ENCODE measurements at regions of chr10 and their contacts with region 1.

Region 1: DNA sequence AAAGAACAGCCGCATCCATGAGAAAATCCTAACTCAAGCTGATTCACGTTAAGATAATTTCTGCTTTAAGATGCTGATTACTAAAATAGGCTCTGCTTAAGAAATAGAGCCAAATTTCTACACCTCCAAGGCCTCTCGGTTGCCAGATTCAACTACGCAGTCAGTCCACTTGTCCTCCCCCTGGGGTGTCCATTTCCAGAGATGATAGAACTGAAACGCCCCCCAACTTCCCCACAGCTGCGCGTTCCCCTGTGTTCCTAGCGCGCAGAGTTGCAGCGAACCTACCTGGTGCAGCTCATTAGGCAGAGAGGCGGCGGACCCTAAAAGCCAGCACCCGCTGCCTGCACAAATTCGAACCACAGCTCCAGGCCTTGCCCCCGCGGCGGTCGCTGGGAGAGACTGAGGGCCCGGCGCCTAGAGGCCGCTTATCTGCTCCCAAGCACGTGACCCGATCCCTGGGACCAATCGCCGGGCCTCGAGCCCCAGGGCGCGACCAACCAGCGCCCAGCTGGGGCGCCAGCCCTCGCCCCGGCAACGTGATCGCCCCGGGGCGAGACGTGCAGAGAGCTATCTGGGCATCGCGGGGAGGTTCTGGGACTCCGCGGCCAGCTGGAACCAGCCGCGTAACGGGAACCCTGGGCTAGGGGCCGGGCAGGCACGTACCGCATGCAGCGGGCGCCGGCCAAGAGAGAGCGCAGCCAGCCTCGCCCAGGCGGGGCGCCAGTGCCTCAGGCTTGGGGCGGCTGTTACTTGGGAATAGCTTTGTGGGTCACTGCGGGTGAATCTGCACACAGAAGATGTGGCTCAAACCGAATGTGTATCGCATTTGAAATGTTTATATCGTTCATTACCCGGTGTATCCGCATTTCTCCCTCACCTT is at the start of gene PPP1R3C:
- DNase-seq: peak; percentile 89 to 99 (median 94)

Region 2: DNA sequence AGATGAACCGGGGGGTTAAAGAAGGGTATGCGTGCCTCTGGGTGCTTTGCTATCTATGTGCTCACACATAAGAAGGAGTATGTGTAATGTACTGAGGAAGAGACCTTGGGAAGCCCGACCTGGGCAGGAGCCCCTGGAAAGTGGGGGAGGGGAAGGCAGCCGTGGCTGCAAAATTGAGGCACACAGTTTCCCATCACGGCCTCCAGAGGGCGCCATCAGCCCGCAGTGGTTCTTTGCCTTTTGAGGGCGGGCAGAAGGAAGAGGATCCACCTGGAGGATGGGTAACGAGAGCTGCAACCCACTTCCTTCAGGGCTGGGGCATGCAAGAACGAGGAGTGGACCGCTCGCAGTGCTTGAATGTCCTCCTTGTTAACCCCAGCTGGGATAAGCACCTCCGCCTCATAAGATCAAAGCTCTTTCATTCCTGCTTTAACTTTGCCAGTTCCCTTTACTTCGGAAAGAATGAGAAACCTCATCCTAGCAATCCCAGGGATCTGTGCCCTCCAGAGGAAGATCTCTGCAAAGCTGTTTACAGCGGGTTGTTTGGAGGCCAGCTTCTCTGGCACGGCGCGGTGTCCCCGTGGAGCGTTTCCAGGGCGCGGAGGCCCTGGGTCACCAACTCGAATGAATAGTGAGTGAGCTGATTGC is 334.6 kb before region 1 on chr10:
- intact Hi-C with region 1: loop called (anchors 1 kb)
- DNase-seq: peak; percentile 68 to 96 (median 78)

Region 3: DNA sequence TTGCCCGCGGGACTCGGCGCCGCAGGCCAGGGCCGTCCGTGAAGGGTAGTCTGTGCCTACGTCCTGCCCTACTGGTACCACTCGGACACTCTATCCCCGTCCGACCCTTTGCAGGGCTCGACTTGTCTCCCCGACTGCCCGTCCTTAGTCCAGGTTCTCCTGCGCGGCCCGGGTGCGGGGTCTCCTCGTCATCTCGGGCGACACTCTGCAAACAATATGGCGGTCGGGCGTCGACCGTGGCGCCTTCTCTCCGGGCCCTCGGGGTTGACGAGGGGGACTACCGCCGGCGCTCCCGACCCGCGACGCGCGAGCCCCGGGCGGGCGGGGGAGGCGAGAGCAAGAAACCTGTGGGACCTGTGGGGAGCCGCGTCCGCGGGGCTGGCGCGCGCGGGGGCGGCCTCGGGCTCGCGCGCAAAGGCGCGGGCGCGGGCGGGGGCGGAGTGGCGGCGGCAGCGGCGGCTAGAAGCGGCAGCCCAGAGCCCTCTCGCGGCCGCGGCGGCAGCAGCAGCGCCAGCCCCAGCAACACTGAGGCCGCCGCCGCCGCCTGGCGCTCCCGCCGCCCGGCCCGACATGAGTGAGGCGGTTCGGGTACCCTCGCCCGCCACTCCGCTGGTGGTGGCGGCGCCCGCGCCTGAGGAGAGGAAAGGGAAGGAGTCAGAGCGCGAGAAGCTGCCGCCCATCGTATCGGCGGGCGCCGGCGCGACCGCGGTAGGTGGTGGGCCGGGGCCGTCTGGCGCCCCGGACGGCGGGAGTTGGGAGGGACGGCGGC is 222.9 kb before region 1 on chr10 and contains the start of gene HECTD2:
- intact Hi-C with region 1: loop called (anchors 2 kb)
- DNase-seq: peak; percentile 60 to 97 (median 79)

Region 4: DNA sequence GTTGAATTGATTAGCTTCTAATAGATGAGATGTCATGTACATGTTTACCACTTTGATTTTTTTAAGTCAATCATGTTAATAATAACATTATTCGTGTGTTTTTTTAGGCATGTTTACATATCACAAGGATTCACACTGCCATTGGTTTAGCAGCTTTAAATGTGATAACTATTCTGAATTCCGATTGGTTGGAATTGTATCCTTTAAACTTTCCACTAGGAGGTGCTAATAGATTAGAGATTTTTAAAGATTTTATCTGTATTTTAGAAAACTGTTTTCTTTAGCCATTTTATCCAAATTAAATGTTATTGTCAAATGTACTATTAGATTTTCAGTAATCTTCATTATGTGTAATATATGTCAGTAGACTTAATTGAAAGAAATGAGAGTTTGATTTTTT is 139.6 kb before region 1 on chr10:
- intact Hi-C with region 1: loop called (anchors 1 kb)
- DNase-seq: no peak

Region 5: DNA sequence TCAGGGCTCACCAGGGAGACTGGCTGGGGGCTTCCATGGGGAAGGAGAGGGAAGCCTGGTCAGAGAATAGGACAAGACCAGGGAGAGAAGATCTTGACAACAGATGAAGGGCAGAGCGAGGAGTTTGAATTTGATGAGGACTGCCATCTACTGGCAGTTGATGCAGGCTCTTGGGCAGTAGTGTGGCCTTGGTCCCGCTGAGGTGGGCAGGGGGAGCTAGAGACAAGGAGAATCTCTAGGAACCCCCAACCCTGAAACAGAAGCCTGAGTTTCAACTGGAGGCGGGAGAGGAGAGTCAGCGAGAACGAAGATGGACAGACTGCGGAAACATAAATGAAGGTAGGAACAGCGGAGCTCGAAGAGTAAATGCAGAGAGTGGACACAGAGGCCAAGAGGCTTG is 81.1 kb before region 1 on chr10:
- intact Hi-C with region 1: loop called (anchors 5 kb)
- DNase-seq: peak in 7 of 10 donors; percentile 14 to 87 (median 31)

Region 6: GRCh38 chr10:91797874-91798648 is 165.2 kb after region 1 on chr10 and contains the start of gene TNKS2:
- intact Hi-C with region 1: loop called (anchors 5 kb)
- DNase-seq: peak; percentile 85 to 98 (median 89)

Region 7: DNA sequence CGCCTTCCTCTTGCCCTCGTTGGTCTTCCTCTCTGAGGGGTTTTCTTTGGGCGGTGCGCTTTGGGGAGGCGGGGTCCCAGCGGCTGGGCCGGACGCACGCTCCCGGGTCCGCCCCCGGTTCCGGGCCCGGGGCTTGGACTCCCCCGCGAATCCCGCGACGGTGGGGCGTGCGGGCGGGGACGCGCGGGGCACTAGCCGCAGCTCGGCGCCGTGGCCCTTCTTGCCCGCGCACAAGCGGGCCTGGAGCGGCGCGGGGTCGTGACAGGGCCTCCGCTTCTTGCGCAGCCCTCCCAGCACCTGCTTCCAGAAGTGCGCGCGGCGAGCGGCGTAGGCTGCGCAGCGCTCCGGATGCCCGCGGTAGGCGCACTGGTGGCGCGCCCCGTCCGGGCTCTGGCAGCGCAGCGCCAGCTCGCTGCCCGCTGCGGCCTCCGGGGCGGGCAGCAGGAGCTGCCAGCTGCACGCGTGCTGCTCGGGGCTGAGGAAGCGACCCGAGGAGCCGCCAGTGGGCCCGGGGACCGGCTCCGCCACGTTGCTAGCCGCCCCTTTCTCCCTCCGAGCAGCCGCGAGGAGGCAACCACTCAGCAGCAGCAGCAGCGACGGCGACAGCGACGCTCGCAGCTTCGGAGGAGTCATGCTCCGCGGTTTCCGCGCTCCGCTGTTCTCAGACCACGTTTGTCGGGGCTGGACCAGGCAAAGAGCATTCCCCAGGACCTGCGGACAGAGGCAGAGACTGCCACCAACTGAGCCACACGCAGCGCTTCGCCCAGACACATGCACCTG is 275.6 kb after region 1 on chr10:
- intact Hi-C with region 1: loop called (anchors 10 kb)
- DNase-seq: peak; percentile 58 to 96 (median 76)